Mammary epithelial cell (primary cell): ENCODE measurements at regions of chr14 and their contacts with region 1.

Region 1: DNA sequence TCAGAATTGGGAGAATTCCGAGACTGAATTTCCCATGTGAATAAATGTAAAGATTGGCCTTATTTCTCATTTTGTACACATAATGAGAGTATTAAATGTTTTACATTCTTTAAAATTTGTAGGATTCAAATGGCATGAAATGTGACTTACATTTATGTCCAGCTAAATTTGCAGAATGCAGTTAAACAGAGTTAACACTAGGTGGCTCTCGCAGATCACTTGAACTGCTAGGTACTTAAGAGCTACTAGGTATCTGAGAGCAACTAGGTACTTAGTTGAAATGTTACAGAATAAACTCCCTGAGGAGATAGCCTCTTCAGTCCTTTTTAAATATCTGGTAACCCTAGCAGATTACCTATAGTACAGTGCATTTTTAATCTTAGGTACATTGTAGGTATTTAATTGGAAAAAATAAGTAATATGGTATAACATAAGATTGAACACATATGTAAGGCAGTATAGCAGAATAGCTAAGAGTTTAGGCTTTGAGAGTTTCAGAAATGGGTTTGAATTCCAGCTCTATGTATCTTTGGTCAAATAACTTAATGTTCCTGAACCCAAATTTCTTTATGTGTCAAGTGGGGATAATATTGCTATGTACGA is 73.8 kb downstream of the KIAA0586 start:
- DNase-seq: peak; percentile 38
- H3K4me3 ChIP-seq: no peak overlapping the region
- H3K27ac ChIP-seq: no peak overlapping the region
- H3K4me1 ChIP-seq: no peaks in the 10 kb centered on the region
- H3K27me3 ChIP-seq: no peaks in the 10 kb centered on the region
- CTCF ChIP-seq: peak; percentile 84 to 86

Region 2: DNA sequence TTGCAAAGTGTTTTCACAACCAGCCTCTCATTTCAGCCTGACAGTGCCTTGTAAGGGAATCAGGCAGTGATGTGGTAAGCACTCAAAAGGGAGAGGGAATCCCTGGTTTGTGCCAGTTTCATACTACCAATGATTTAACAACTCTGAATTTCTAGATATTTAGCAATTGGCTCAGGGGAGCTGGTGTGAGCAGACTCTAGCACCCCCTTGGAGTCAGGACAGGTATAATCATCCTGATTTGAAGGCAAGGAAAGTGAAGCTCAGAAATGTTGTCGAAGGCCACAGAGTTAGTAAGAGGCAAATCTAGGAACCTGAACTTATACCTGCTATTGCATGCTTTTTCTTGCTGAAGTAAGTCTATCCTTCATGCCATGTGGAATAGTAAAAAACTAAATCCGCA is 73.3 kb after region 1 on chr14:
- CTCF ChIA-PET with region 1: interaction called, 3 read pairs
- dilution Hi-C with region 1: no loop called
- in situ Hi-C with region 1: no loop called
- intact Hi-C with region 1: loop called (anchors 2 kb)
- DNase-seq: no peak
- H3K4me3 ChIP-seq: no peak overlapping the region
- H3K27ac ChIP-seq: no peak overlapping the region
- H3K4me1 ChIP-seq: no peaks in the 10 kb centered on the region
- H3K27me3 ChIP-seq: peaks cover 3% of the 10 kb centered on the region
- CTCF ChIP-seq: peak; percentile 10 to 18

Region 3: GRCh38 chr14:58815161-58815701 is 313.9 kb after region 1 on chr14:
- CTCF ChIA-PET with region 1: no interaction called
- dilution Hi-C with region 1: no loop called
- in situ Hi-C with region 1: no loop called
- intact Hi-C with region 1: loop called (anchors 5 kb)
- DNase-seq: peak; percentile 8
- H3K4me3 ChIP-seq: no peak overlapping the region
- H3K27ac ChIP-seq: no peak overlapping the region
- H3K4me1 ChIP-seq: peaks cover 3% of the 10 kb centered on the region
- H3K27me3 ChIP-seq: no peaks in the 10 kb centered on the region
- CTCF ChIP-seq: no peak

Region 4: GRCh38 chr14:59028476-59029202 is 527.3 kb after region 1 on chr14:
- CTCF ChIA-PET with region 1: interaction called, 5 read pairs
- dilution Hi-C with region 1: no loop called
- in situ Hi-C with region 1: no loop called
- intact Hi-C with region 1: loop called (anchors 5 kb)
- DNase-seq: peak; percentile 58
- H3K4me3 ChIP-seq: no peak overlapping the region
- H3K27ac ChIP-seq: no peak overlapping the region
- H3K4me1 ChIP-seq: no peaks in the 10 kb centered on the region
- H3K27me3 ChIP-seq: peaks cover 1% of the 10 kb centered on the region
- CTCF ChIP-seq: peak; percentile 89 to 97

Region 5: GRCh38 chr14:59055439-59056045 is 554.2 kb after region 1 on chr14:
- CTCF ChIA-PET with region 1: no interaction called
- dilution Hi-C with region 1: no loop called
- in situ Hi-C with region 1: loop called (anchors 10 to 25 kb)
- intact Hi-C with region 1: loop called (anchors 1 kb)
- DNase-seq: peak; percentile 31
- H3K4me3 ChIP-seq: no peak overlapping the region
- H3K27ac ChIP-seq: no peak overlapping the region
- H3K4me1 ChIP-seq: no peaks in the 10 kb centered on the region
- H3K27me3 ChIP-seq: no peaks in the 10 kb centered on the region
- CTCF ChIP-seq: peak; percentile 70 to 84